ENCODE measurements at regions of chr10 and their contacts with region 1.

Region 1: GRCh38 chr10:80504897-80505465 is 32.7 kb upstream of the SH2D4B start:
- DNase-seq: peak in 1 of 2 donors; percentile 42
- ATAC-seq: no peak
- H3K4me3 ChIP-seq: no peak overlapping the region
- H3K4me3 Mint-ChIP-seq: peak overlapping the region; percentile 69
- H3K27ac ChIP-seq: peak overlapping the region; percentile 52
- H3K27ac Mint-ChIP-seq: peak overlapping the region; percentile 75 to 81
- H3K4me1 ChIP-seq: peaks cover 61% of the 10 kb centered on the region
- H3K4me1 Mint-ChIP-seq: peaks cover 63 to 68% of the 10 kb centered on the region in 2 donors
- H3K27me3 ChIP-seq: no peaks in the 10 kb centered on the region
- H3K27me3 Mint-ChIP-seq: no peaks in the 10 kb centered on the region
- CTCF ChIP-seq: no peak

Region 2: GRCh38 chr10:80382989-80383388 is 122.0 kb before region 1 on chr10:
- intact Hi-C with region 1: loop called (anchors 1 kb)
- DNase-seq: peak in 1 of 2 donors; percentile 78
- ATAC-seq: peak in 2 of 3 donors; percentile 73 to 77
- H3K4me3 ChIP-seq: no peak overlapping the region
- H3K4me3 Mint-ChIP-seq: no peak overlapping the region
- H3K27ac ChIP-seq: no peak overlapping the region
- H3K27ac Mint-ChIP-seq: no peak overlapping the region
- H3K4me1 ChIP-seq: peaks cover 3% of the 10 kb centered on the region
- H3K4me1 Mint-ChIP-seq: peaks cover 10% of the 10 kb centered on the region in 2 donors
- H3K27me3 ChIP-seq: no peaks in the 10 kb centered on the region
- H3K27me3 Mint-ChIP-seq: peaks cover 0 to 3% of the 10 kb centered on the region in 2 donors
- CTCF ChIP-seq: peak; percentile 52

Region 3: DNA sequence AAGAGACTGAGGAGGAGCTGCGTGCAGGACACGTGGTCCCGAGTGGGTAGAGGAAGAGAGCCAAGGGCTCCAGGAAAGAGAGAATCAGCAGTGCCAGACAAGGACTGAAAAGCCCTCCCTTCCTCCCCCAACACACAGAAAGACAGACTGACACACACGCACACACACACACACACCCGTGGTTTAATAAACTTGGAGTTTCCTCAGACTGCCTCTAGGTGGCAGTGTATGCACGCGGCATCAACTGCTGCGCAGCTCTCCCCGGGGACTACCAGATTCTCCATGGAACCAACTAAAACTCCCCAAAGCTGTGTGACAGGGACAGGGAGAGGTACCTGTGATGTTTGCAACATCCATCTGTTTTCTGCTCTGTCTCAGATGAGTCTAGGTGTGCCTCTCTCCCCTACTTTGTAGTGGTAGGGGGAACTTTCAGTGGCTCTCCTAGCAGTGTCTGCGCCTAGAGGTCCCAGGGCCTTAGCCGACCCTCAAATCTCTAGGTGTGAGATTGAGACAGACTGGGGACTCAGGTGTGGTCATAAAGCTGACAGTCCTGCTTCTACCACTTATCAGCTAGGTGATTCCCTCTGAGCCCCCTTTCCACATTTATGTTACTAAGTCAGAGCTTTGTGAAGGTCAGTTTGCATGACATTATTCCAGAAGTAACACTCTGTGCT is 60.2 kb before region 1 on chr10:
- intact Hi-C with region 1: loop called (anchors 1 kb)
- DNase-seq: peak; percentile 55 to 88
- ATAC-seq: peak; percentile 91 to 97 (median 97)
- H3K4me3 ChIP-seq: no peak overlapping the region
- H3K4me3 Mint-ChIP-seq: no peak overlapping the region
- H3K27ac ChIP-seq: no peak overlapping the region
- H3K27ac Mint-ChIP-seq: peak overlapping the region in 1 of 2 donors; percentile 59
- H3K4me1 ChIP-seq: peaks cover 17% of the 10 kb centered on the region
- H3K4me1 Mint-ChIP-seq: peaks cover 22 to 31% of the 10 kb centered on the region in 2 donors
- H3K27me3 ChIP-seq: no peaks in the 10 kb centered on the region
- H3K27me3 Mint-ChIP-seq: no peaks in the 10 kb centered on the region
- CTCF ChIP-seq: peak; percentile 74

Region 4: GRCh38 chr10:80472234-80473095 is 32.5 kb before region 1 on chr10:
- intact Hi-C with region 1: no loop called
- DNase-seq: peak in 1 of 2 donors; percentile 76
- ATAC-seq: peak in 2 of 3 donors; percentile 11 to 61
- H3K4me3 ChIP-seq: no peak overlapping the region
- H3K4me3 Mint-ChIP-seq: peak overlapping the region; percentile 29
- H3K27ac ChIP-seq: peak overlapping the region; percentile 54
- H3K27ac Mint-ChIP-seq: peak overlapping the region; percentile 91 to 92
- H3K4me1 ChIP-seq: peaks cover 92% of the 10 kb centered on the region
- H3K4me1 Mint-ChIP-seq: peaks cover 89 to 91% of the 10 kb centered on the region in 2 donors
- H3K27me3 ChIP-seq: no peaks in the 10 kb centered on the region
- H3K27me3 Mint-ChIP-seq: no peaks in the 10 kb centered on the region
- CTCF ChIP-seq: no peak